HEK293 (cell line): ENCODE measurements at regions of chr2 and their contacts with region 1.

Region 1: DNA sequence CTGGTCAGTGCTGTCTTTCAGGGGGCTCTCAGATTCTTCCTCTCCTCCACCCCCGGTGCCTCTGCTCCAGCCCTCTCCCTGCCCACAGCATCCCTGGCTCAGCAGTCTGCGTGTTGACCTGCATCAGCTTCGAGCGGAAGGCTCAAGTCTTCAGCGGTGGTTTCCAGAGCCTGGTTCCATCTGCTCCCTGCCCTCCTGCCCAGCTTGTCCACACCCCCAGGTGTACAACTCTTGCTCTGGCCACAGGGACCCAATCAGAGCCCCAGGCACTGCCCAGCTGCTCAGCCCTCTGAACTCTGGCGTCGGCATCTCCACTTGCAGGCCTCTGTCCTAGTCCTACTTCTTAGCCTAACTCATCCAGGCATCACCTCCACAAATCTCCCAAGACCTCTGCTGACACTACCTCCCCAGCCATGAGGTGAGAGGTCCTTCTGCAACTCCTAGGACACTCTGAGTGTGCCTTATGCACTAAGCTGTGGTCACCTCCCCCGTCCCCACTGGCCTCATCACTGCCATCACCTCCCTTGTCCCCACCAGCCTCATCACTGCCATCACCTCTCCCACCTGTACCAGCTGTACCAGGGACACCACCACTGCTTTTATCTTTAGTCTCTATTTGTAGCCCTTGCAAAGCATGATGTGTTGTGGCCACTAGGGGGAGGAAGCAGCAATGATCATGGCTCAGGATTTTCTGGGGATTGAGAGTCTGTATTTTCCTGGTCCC is 60.9 kb downstream of the EDAR start:
- H3K4me3 ChIP-seq: no peak overlapping the region
- H3K27ac ChIP-seq: no peak overlapping the region
- H3K4me1 ChIP-seq: no peaks in the 10 kb centered on the region
- CTCF ChIP-seq: peak; percentile 69

Region 2: DNA sequence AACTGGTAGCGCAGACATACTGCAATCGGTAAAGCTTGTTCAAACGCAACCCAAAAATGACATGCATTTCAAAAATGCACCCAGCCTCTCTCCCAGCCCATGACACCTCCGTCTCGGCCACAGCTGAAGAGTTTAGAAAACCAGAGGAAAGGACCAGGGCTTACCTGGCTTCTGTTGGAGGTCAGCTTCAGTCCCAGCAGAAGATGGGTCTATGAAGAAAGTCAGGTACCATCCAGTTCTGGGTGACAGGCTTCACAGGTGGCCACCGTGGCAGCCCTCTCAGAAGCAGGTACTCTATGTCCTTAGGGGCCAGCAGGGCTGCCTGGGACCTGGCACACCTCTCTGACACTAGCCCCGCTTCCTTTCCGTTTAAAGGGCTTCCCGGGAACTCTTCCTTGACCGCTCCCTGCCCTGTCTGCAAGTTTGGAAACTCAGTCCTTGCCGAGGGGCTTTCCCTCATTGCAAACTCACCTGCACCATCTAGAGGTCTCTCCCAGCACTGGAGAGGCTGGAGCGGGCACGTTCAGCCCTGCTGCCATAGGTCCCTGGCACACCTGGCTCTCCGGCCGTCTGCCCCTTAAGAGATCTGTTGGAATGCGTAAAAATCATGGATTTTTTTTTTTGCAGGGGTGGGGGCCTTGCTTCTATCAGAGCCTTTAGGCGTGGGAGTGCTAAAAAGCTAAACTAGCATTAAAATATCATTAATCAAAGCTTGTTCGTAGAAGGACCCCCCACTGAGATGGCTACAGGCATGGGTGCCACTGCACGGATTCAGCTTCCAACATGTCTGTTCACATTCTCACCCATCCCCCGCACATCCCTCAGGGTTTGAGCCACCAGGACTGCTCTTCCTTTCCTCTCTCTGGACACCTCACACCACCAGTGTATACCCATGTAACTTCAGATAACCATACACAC is 61.0 kb after region 1 on chr2 and contains the start of gene EDAR:
- CTCF ChIA-PET with region 1: interaction called, 74 read pairs
- POLR2A ChIA-PET with region 1: no interaction called
- H3K4me3 ChIP-seq: no peak within 1 kb of the TSS
- H3K27ac ChIP-seq: no peak within 1 kb of the TSS
- H3K4me1 ChIP-seq: peaks cover 4% of the 10 kb centered on the region
- CTCF ChIP-seq: peak; percentile 81